B cell (primary cell): ENCODE measurements at regions of chr12 and their contacts with region 1.

Region 1: DNA sequence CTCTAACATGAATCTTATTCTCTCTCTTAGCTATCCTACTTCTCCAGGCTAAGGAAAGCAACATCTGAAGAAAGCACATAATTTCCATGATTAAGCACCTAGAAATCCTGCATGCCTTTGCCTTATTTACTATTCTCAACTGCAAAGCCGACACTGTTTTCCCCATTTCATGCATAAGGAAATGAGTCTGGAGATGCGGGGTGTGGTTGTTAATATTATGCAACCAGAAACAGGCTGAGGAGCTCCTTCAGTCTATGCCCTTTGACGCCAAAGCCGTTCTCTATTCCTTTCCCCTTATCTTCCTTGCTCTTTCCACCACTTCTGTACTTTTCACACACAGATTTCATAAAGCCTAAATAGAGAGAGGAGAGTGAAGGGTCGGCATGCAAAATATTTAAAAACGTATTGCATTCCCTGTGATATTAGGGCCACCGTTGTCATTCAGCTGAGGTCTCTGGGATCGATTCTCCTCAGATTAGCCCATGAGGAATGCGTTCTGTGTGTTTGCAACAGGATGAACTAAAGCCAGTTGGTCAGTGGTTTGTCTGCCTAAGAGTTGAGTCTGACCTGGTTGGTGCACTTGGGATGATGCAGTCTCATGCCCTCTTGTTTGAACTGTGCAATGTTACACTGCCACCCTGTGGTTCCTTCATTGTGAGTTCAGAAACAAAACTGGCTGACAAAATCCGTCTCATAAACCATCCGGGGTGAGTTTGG is 53.1 kb upstream of the PLEKHG7 start:
- DNase-seq: peak; percentile 76
- ATAC-seq: peak; percentile 89
- H3K4me3 ChIP-seq: no peak overlapping the region
- H3K4me3 Mint-ChIP-seq: no peak overlapping the region
- H3K27ac ChIP-seq: no peak overlapping the region
- H3K27ac Mint-ChIP-seq: no peak overlapping the region
- H3K4me1 ChIP-seq: no peaks in the 10 kb centered on the region
- H3K4me1 Mint-ChIP-seq: peaks cover 3% of the 10 kb centered on the region
- H3K27me3 ChIP-seq: no peaks in the 10 kb centered on the region
- H3K27me3 Mint-ChIP-seq: peaks cover 9% of the 10 kb centered on the region
- CTCF ChIP-seq: peak; percentile 82

Region 2: GRCh38 chr12:90978117-90978770 is 1671.4 kb before region 1 on chr12:
- CTCF ChIA-PET with region 1: no interaction called
- POLR2A ChIA-PET with region 1: no interaction called
- intact Hi-C with region 1: loop called (anchors 5 kb)
- DNase-seq: peak; percentile 15
- ATAC-seq: no peak
- H3K4me3 ChIP-seq: no peak overlapping the region
- H3K4me3 Mint-ChIP-seq: no peak overlapping the region
- H3K27ac ChIP-seq: no peak overlapping the region
- H3K27ac Mint-ChIP-seq: no peak overlapping the region
- H3K4me1 ChIP-seq: no peaks in the 10 kb centered on the region
- H3K4me1 Mint-ChIP-seq: no peaks in the 10 kb centered on the region
- H3K27me3 ChIP-seq: no peaks in the 10 kb centered on the region
- H3K27me3 Mint-ChIP-seq: peaks cover 4% of the 10 kb centered on the region
- CTCF ChIP-seq: peak; percentile 44

Region 3: DNA sequence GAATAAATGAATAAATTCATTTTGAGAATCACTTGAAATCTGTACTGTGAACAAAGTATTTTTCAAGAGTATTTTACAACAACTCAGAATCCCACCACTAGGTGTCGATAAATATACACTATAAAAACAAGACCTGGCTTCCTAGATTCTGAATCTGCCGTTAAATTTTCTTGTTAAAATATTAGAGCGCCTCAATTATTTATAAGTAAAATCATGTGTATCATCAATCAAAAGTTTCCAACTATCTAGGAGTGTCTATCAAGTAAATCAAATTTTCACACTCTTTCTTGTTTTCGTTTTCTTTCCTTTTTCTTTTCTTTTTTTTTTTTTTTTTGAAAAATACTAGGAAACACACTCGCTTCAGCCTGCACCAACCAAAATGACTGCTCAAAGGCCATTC is 1287.8 kb before region 1 on chr12:
- CTCF ChIA-PET with region 1: interaction called, 8 read pairs
- POLR2A ChIA-PET with region 1: no interaction called
- intact Hi-C with region 1: loop called (anchors 1 kb)
- DNase-seq: peak; percentile 56
- ATAC-seq: no peak
- H3K4me3 ChIP-seq: no peak overlapping the region
- H3K4me3 Mint-ChIP-seq: no peak overlapping the region
- H3K27ac ChIP-seq: no peak overlapping the region
- H3K27ac Mint-ChIP-seq: no peak overlapping the region
- H3K4me1 ChIP-seq: no peaks in the 10 kb centered on the region
- H3K4me1 Mint-ChIP-seq: peaks cover 7% of the 10 kb centered on the region
- H3K27me3 ChIP-seq: no peaks in the 10 kb centered on the region
- H3K27me3 Mint-ChIP-seq: peaks cover 10% of the 10 kb centered on the region
- CTCF ChIP-seq: peak; percentile 75

Region 4: GRCh38 chr12:91577586-91578539 is 1071.8 kb before region 1 on chr12:
- CTCF ChIA-PET with region 1: interaction called, 3 read pairs
- POLR2A ChIA-PET with region 1: no interaction called
- intact Hi-C with region 1: loop called (anchors 1 kb)
- DNase-seq: peak; percentile 45
- ATAC-seq: peak; percentile 82
- H3K4me3 ChIP-seq: peak overlapping the region in 2 of 5 experiments; percentile 28 to 51
- H3K4me3 Mint-ChIP-seq: peak overlapping the region; percentile 68
- H3K27ac ChIP-seq: no peak overlapping the region
- H3K27ac Mint-ChIP-seq: no peak overlapping the region
- H3K4me1 ChIP-seq: peaks cover 0 to 5% of the 10 kb centered on the region in 2 donors
- H3K4me1 Mint-ChIP-seq: peaks cover 4% of the 10 kb centered on the region
- H3K27me3 ChIP-seq: peaks cover 0 to under 1% (median 0%) of the 10 kb centered on the region in 4 experiments
- H3K27me3 Mint-ChIP-seq: peaks cover 20% of the 10 kb centered on the region
- CTCF ChIP-seq: peak; percentile 92

Region 5: GRCh38 chr12:91991399-91992187 is 658.1 kb before region 1 on chr12:
- CTCF ChIA-PET with region 1: no interaction called
- POLR2A ChIA-PET with region 1: no interaction called
- intact Hi-C with region 1: loop called (anchors 5 kb)
- DNase-seq: peak; percentile 58
- ATAC-seq: peak; percentile 61
- H3K4me3 ChIP-seq: no peak overlapping the region
- H3K4me3 Mint-ChIP-seq: no peak overlapping the region
- H3K27ac ChIP-seq: no peak overlapping the region
- H3K27ac Mint-ChIP-seq: no peak overlapping the region
- H3K4me1 ChIP-seq: no peaks in the 10 kb centered on the region
- H3K4me1 Mint-ChIP-seq: peaks cover 3% of the 10 kb centered on the region
- H3K27me3 ChIP-seq: no peaks in the 10 kb centered on the region
- H3K27me3 Mint-ChIP-seq: no peaks in the 10 kb centered on the region
- CTCF ChIP-seq: peak; percentile 34

Region 6: GRCh38 chr12:92593734-92594402 is 55.8 kb before region 1 on chr12:
- CTCF ChIA-PET with region 1: interaction called, 15 read pairs
- POLR2A ChIA-PET with region 1: no interaction called
- intact Hi-C with region 1: no loop called
- DNase-seq: peak; percentile 94
- ATAC-seq: peak; percentile 93
- H3K4me3 ChIP-seq: peak overlapping the region in 2 of 5 experiments; percentile 20 to 22
- H3K4me3 Mint-ChIP-seq: peak overlapping the region; percentile 69
- H3K27ac ChIP-seq: peak overlapping the region; percentile 86 to 97
- H3K27ac Mint-ChIP-seq: peak overlapping the region; percentile 94
- H3K4me1 ChIP-seq: peaks cover 21 to 25% of the 10 kb centered on the region in 2 donors
- H3K4me1 Mint-ChIP-seq: peaks cover 34% of the 10 kb centered on the region
- H3K27me3 ChIP-seq: no peaks in the 10 kb centered on the region
- H3K27me3 Mint-ChIP-seq: no peaks in the 10 kb centered on the region
- CTCF ChIP-seq: no peak

Region 7: GRCh38 chr12:92879698-92880305 is 230.1 kb after region 1 on chr12:
- CTCF ChIA-PET with region 1: no interaction called
- POLR2A ChIA-PET with region 1: no interaction called
- intact Hi-C with region 1: no loop called
- DNase-seq: no peak
- ATAC-seq: no peak
- H3K4me3 ChIP-seq: no peak overlapping the region
- H3K4me3 Mint-ChIP-seq: no peak overlapping the region
- H3K27ac ChIP-seq: no peak overlapping the region
- H3K27ac Mint-ChIP-seq: no peak overlapping the region
- H3K4me1 ChIP-seq: no peaks in the 10 kb centered on the region
- H3K4me1 Mint-ChIP-seq: peaks cover 4% of the 10 kb centered on the region
- H3K27me3 ChIP-seq: no peaks in the 10 kb centered on the region
- H3K27me3 Mint-ChIP-seq: no peaks in the 10 kb centered on the region
- CTCF ChIP-seq: no peak

Region 8: GRCh38 chr12:92921877-92922276 is 272.2 kb after region 1 on chr12:
- CTCF ChIA-PET with region 1: no interaction called
- POLR2A ChIA-PET with region 1: no interaction called
- intact Hi-C with region 1: no loop called
- DNase-seq: no peak
- ATAC-seq: no peak
- H3K4me3 ChIP-seq: no peak overlapping the region
- H3K4me3 Mint-ChIP-seq: no peak overlapping the region
- H3K27ac ChIP-seq: no peak overlapping the region
- H3K27ac Mint-ChIP-seq: no peak overlapping the region
- H3K4me1 ChIP-seq: peaks cover 5 to 7% of the 10 kb centered on the region in 2 donors
- H3K4me1 Mint-ChIP-seq: peaks cover 27% of the 10 kb centered on the region
- H3K27me3 ChIP-seq: no peaks in the 10 kb centered on the region
- H3K27me3 Mint-ChIP-seq: no peaks in the 10 kb centered on the region
- CTCF ChIP-seq: no peak